Dendritic cell treated with granulocyte-macrophage colony-stimulating factor and Interleukin-4, amounts not matched to agents 40 ng/mL and 50 ng/mL, for 4 days (primary cell): ENCODE measurements at regions of chrX and their contacts with region 1.

Region 1: DNA sequence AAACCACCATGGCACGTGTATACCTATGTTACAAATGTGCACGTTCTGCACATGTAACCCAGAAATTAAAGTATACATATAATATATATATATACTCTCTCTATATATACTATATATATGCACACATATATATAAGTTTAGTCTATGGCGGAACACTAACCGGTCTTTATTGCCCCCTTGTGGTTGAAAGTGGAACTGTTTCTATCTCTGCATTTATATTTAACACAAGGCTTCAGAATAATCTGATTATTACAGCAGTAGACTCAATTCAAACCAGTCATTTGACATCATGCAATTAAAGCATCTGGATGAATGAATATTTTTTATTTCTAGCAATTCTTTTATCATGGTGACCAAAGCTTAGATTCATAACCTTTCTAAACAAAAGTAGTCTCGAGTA is 14.6 kb downstream of the RAB9B start:
- H3K4me3 Mint-ChIP-seq: no peak overlapping the region
- H3K27ac Mint-ChIP-seq: no peak overlapping the region
- H3K4me1 Mint-ChIP-seq: no peaks in the 10 kb centered on the region
- H3K27me3 Mint-ChIP-seq: peaks cover 4% of the 10 kb centered on the region

Region 2: DNA sequence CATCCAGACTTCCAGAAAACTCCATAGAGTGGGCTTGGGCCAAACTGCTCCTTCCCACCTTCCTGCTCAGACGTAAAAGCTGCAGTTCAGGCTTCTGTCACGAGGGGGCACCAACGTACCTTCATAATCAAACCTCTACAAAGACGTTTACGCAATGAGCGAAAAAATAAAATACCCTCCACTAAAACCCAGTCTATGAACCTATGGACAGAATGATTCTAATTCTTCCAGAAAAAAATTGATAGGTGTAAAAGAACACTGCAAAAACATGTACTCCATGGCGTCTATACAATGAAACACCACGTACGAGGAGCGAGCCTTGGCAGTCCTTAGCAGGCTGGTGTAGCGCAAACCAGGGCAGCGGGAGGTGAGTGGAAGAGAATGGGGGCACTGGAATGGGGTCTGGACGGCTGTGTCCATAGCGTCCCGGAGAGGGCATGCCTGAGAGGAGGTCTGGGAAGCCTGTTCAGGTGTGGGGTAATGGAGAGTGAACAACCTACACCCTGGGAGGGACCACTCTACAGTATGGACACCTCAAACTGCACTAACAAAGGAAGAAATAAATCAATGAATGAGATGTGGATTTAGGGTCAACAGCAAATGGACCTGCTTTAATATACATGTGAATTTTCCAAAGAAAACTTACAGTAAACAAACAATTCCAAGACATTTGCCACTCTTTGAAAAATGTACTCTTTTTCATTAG is 283.8 kb before region 1 on chrX:
- intact Hi-C with region 1: loop called (anchors 1 kb)
- H3K4me3 Mint-ChIP-seq: peak overlapping the region; percentile 62
- H3K27ac Mint-ChIP-seq: no peak overlapping the region
- H3K4me1 Mint-ChIP-seq: peaks cover 6% of the 10 kb centered on the region
- H3K27me3 Mint-ChIP-seq: no peaks in the 10 kb centered on the region

Region 3: DNA sequence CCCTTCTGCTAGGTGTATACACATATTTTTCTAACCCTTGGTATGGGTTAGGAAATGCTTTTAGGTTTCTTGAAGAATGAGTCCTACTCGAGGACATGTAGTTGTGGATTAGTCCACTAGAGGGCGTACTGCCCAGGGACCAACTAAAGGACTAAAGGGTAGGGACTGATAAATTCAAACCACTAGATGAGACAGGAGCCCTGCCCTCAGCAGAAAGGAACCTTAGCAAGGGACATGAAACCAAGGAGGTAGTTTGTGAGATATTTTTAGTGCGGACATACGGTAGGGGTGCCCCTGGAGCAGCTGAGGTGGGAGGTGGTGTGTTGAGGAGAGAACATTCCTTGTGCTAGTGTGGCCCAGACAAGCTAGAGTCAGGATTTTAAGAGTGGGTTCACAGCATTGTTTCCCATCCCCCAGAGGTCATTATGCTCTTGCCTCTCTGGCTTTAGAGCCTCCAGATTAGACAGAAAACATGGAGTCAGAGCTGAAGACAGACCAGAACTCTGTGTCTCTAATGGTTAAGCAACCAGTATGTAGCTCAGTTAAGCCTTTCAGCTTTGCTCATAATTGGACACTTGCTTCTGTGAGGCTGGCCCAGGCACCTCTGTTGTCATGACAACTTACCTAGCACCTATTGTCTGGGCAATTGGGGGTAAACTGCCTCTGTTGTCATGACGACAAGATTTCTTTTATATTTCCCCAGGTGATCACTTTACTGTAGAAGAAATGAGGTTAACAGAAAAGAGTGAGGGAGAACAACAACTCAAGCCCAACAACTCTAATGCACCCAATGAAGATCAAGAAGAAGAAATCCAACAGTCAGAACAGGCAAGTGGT is 105.8 kb before region 1 on chrX:
- intact Hi-C with region 1: loop called (anchors 5 kb)
- H3K4me3 Mint-ChIP-seq: no peak overlapping the region
- H3K27ac Mint-ChIP-seq: no peak overlapping the region
- H3K4me1 Mint-ChIP-seq: no peaks in the 10 kb centered on the region
- H3K27me3 Mint-ChIP-seq: no peaks in the 10 kb centered on the region